Heart right ventricle (tissue), 16 donors: ENCODE measurements at regions of chr6 and their contacts with region 1.

Region 1: GRCh38 chr6:41787219-41787917 is at the start of gene TOMM6:
- DNase-seq: peak; percentile 95 to 96
- ATAC-seq: peak; percentile 83 to 95 (median 90)
- H3K4me3 ChIP-seq: peak within 1 kb of the TSS; percentile 54 to 96 (median 80)
- H3K27ac ChIP-seq: peak within 1 kb of the TSS; percentile 82 to 97 (median 94)
- H3K4me1 ChIP-seq: peaks cover 12 to 70% (median 46%) of the 10 kb centered on the region in 9 donors
- H3K27me3 ChIP-seq: no peaks in the 10 kb centered on the region
- CTCF ChIP-seq: peak; percentile 84 to 94 (median 91)
- total RNA-seq, gene TOMM6: 156 to 210 (median 186) TPM

Region 2: GRCh38 chr6:41367700-41368099 is 419.7 kb before region 1 on chr6:
- intact Hi-C with region 1: loop called in 2 of 10 experiments (anchors 10 kb)
- DNase-seq: peak; percentile 25 to 56
- ATAC-seq: peak in 7 of 8 donors; percentile 59 to 80 (median 76)
- H3K4me3 ChIP-seq: no peak overlapping the region
- H3K27ac ChIP-seq: no peak overlapping the region
- H3K4me1 ChIP-seq: peaks cover 0 to 26% (median 16%) of the 10 kb centered on the region in 9 donors
- H3K27me3 ChIP-seq: peaks cover 0 to 96% (median 66%) of the 10 kb centered on the region in 7 donors
- CTCF ChIP-seq: peak; percentile 20 to 76 (median 59)

Region 3: GRCh38 chr6:41672821-41673703 is 114.3 kb before region 1 on chr6:
- intact Hi-C with region 1: no loop called
- DNase-seq: no peak
- ATAC-seq: peak in 1 of 8 donors; percentile 30
- H3K4me3 ChIP-seq: no peak overlapping the region
- H3K27ac ChIP-seq: no peak overlapping the region
- H3K4me1 ChIP-seq: no peaks in the 10 kb centered on the region
- H3K27me3 ChIP-seq: peaks cover 0 to 18% (median 0%) of the 10 kb centered on the region in 7 donors
- CTCF ChIP-seq: no peak

Region 4: DNA sequence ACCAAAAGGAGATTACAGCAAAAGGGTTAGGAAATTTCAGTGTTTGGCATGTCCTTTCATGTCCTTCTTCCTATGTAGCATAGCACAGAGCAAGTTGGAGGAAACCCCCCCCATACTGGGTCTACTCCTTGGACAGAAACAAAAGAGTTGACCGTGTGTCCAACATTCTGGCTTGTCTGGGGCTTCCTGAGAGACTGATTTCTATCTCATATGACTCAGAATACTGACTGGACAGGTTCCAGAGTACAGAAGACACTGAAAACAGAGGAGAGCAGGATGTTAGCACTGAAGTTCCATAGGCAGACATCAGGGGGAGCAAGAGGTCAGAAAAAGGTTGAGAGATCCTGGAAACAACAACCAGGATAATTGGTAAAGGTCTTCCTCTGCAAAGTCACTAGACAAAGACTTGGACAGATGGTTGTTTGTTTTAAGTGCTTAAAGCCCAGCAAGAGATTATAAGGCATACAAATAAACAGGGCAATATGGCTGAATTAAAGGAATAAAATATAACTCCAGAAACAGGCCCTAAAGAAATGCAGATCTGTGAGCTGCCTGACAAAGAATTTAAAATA is 59.4 kb after region 1 on chr6:
- intact Hi-C with region 1: loop called in 1 of 10 experiments (anchors 2 kb)
- DNase-seq: peak in 1 of 2 donors; percentile 83
- ATAC-seq: peak; percentile 94 to 98 (median 96)
- H3K4me3 ChIP-seq: no peak overlapping the region
- H3K27ac ChIP-seq: peak overlapping the region in 7 of 10 donors; percentile 29 to 79 (median 57)
- H3K4me1 ChIP-seq: peaks cover 0 to 16% (median 13%) of the 10 kb centered on the region in 9 donors
- H3K27me3 ChIP-seq: no peaks in the 10 kb centered on the region
- CTCF ChIP-seq: peak; percentile 55 to 89 (median 80)

Region 5: DNA sequence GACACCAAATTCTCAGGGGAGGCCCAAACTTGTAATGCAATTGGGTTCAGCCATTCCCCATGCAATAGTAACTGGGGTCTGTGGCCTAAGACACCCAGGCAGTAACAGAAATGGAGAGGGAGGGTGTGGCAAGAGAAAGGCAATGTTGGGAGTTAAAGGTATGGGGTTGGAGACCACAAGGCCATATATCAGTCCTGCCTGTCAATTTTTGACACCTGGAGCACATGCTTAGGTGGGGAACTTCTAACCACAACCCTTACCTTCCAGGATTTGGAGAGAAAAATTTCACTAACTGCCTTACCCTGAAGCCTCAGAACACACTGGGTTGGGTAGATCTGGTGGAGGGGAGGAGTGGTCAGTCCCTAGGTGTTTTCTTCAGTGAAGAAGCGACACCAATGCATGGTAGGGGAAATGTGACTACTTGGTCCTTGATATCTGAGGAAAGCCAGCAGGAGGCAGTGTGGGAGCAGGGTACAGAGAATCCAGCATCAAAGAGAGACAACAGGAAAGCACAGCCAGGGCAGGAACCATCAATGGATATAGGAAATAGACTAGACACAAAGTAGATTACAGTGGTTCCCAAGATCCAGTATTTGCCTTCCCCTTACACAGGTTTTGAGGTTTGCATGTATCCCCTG is 114.6 kb after region 1 on chr6:
- intact Hi-C with region 1: loop called in 4 of 10 experiments (anchors 10 kb)
- DNase-seq: peak in 1 of 2 donors; percentile 10
- ATAC-seq: no peak
- H3K4me3 ChIP-seq: no peak overlapping the region
- H3K27ac ChIP-seq: no peak overlapping the region
- H3K4me1 ChIP-seq: peaks cover 0 to 19% (median 4%) of the 10 kb centered on the region in 9 donors
- H3K27me3 ChIP-seq: no peaks in the 10 kb centered on the region
- CTCF ChIP-seq: peak in 5 of 9 donors; percentile 13 to 39 (median 23)

Region 6: DNA sequence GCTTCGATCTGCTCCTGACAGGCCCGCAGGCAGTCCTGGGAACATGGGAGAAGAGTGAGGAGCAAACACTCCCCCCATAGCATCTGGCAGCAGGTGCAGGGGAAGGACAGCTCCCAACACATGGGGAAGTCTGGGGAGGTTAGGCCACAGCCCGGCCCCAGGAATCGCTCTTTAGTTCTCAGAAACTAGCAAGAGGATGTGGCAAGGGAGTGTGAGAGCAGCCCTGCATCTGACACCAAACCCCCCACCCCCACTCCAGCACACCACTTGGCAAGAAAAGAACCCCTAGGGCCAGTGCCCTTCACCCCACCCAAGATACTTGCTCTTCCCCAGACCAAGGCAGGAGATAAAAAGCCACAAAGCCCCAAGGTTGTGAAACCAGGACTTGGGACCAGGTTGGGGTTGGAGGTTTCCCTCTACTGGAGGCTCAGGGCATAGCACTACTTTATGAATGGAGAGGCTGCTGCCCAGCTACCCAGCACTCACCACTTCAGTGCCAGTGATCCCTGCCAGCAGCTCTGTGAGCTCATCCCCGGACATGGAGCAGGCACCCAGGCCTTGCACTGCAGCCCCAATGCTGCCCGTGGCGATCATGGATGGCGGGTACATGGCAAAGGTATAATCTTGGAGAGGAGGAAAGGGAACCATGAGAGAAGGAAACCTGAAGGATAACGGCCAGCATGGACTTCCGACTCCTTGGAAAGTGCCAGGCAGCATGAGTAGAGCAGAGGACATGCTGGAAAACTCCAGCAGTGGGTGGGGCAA is 148.9 kb after region 1 on chr6:
- intact Hi-C with region 1: loop called in 5 of 10 experiments (anchors 5 kb)
- DNase-seq: peak; percentile 56 to 81
- ATAC-seq: peak; percentile 46 to 79 (median 70)
- H3K4me3 ChIP-seq: peak overlapping the region in 1 of 10 donors; percentile 11
- H3K27ac ChIP-seq: peak overlapping the region in 8 of 10 donors; percentile 11 to 94 (median 88)
- H3K4me1 ChIP-seq: peaks cover 26 to 64% (median 49%) of the 10 kb centered on the region in 9 donors
- H3K27me3 ChIP-seq: no peaks in the 10 kb centered on the region
- CTCF ChIP-seq: peak; percentile 67 to 85 (median 81)

Region 7: DNA sequence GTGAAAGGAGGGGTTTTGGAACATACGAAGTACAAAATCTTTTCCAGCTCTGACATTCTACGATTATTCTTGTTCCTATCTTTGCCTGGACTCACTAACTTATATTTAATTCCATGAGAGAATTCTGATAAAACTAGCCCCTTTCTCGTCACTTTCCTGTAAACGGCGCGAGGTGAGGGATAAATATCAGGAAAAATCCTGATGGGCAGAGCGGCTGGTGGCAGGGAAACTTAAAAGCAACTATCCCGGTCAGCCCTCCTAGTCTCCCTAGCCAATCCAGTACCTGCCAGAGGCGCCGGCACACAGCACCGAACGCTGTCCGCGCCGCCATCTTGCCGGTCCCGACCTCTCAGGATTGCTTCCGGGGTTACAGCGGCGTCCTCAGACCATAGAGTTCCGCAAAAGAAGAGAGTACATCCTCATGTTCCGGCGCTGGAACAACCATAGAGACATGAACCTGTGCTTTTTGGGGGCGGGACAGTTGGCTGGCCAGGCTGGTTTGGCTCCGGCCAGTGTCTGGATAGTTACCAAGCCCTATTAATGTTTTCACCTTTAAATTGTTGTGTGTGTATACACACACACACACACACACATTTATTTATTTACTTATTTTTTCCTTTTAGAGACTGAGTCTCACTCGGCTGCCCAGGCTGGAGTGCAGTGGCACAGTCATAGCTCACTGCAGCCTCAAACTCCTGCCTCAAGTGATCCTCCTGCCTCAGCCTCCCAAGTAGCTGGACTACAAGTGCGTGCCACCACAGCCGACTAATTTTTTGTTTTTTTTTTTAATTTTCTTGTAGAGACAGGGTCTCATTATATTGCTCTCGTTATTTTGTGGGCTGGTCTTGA is 430.4 kb after region 1 on chr6 and contains the start of gene MRPS10:
- intact Hi-C with region 1: loop called in 2 of 10 experiments (anchors 10 kb)
- DNase-seq: peak; percentile 88 to 94
- ATAC-seq: peak; percentile 99 to 100 (median 100)
- H3K4me3 ChIP-seq: peak within 1 kb of the TSS; percentile 59 to 88 (median 77)
- H3K27ac ChIP-seq: peak within 1 kb of the TSS in 9 of 10 donors; percentile 49 to 89 (median 81)
- H3K4me1 ChIP-seq: peaks cover 0 to 28% (median 20%) of the 10 kb centered on the region in 9 donors
- H3K27me3 ChIP-seq: no peaks in the 10 kb centered on the region
- CTCF ChIP-seq: no peak
- total RNA-seq, gene MRPS10: 47.4 to 82.1 (median 63.1) TPM